HCT116 (cell line): ENCODE measurements at regions of chr4 and their contacts with region 1.

Region 1: DNA sequence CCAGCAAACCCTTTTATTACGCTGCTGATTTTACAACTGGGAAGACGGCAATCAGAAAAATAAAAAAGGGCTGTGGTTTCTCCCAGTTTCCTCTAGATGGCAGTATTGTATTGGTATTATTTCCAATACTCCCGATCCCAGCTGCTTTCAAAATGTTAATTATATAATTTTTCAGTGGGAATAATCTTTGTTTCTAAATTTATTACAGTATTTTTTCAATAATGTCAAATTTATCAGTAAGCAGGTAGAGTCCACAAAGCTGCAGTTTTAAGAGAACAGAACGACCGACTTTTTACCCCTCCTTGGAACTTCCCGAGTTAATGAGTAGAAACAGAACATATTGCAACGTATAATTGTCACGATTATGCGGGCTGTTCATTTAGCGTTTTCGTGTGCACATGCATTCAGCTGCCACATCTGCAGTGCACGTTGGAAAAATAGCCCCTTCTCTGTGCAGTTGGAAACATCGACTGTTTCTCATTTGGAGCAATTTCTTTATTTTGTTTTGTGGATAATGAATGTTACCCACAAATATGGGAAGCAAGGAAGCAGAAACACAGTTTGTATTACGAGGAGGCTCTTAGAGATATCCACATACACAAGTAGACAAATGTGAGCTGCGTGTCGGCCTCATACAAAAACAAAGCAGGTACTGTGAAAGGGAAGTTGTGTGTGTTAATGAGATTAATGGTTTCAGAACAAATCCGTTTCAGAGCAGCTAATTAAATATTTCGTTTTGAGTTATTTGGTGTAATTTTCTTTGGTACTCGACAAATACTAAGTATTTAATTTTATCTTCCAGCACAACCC is 188.0 kb downstream of the STIM2 start:
- DNase-seq: peak; percentile 21
- ATAC-seq: peak; percentile 64
- H3K4me3 ChIP-seq: peak overlapping the region; percentile 26 to 40
- H3K27ac ChIP-seq: no peak overlapping the region
- H3K4me1 ChIP-seq: peaks cover 0 to 4% of the 10 kb centered on the region in 2 experiments; a peak in 1 of 4 replicates
- H3K27me3 ChIP-seq: peaks cover 11% of the 10 kb centered on the region; the same call in 1 of the 2 replicates
- CTCF ChIP-seq: peak; percentile 31 to 65 (median 49); a peak in 4 of 6 replicates
- POLR2A ChIP-seq: no peak
- RAD21 ChIP-seq: peak; percentile 82

Region 2: DNA sequence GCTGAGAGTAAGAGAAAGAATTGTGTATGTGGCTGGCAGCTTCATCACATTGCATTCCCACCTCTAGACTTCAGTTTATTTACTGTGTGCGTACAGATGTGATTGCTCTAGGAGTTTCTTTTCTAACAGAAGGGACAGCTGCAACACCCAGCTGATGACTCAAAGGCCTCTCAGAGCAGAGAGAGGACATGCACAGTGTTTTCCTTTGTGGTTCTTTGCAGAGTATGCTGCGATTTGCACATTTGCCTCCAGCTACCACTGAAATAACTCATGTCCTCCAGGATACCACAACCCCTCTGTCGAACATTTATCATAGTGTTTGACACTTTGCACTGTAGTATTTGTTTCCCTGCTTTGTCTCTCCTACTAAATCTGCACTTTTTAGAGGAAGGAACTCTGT is 106.1 kb after region 1 on chr4:
- CTCF ChIA-PET with region 1: no interaction called
- POLR2A ChIA-PET with region 1: no interaction called
- RAD21 ChIA-PET with region 1: no interaction called
- intact Hi-C with region 1: no loop called
- DNase-seq: no peak
- ATAC-seq: no peak
- H3K4me3 ChIP-seq: no peak overlapping the region
- H3K27ac ChIP-seq: no peak overlapping the region
- H3K4me1 ChIP-seq: no peaks in the 10 kb centered on the region
- H3K27me3 ChIP-seq: no peaks in the 10 kb centered on the region
- CTCF ChIP-seq: no peak
- POLR2A ChIP-seq: no peak
- RAD21 ChIP-seq: no peak

Region 3: DNA sequence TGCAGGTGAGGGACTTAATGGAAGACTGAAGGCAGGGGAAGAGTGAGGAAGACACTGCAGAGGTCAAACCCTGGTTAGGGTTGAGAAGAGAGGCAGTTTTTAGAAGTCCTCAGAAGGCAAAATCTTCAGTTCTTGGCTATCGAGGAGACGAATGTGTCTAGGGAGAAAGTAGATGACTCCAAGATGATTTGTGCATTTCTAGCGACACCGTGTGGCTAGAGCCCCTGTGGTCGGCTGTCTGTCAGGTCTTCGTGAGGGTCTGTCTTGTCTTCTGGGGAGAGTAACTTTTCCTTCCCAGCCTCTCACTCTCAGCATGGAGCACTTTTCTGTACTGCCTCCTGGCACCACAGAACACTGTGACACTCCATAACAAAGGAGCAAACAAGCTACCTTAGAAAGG is 270.1 kb after region 1 on chr4:
- CTCF ChIA-PET with region 1: interaction called, 9 read pairs
- POLR2A ChIA-PET with region 1: no interaction called
- RAD21 ChIA-PET with region 1: interaction called in 1 of 2 experiments, 3 read pairs
- intact Hi-C with region 1: loop called (anchors 1 kb)
- DNase-seq: peak; percentile 35
- ATAC-seq: peak; percentile 84
- H3K4me3 ChIP-seq: no peak overlapping the region
- H3K27ac ChIP-seq: no peak overlapping the region
- H3K4me1 ChIP-seq: no peaks in the 10 kb centered on the region
- H3K27me3 ChIP-seq: no peaks in the 10 kb centered on the region
- CTCF ChIP-seq: peak; percentile 33 to 59 (median 50); a peak in 4 of 6 replicates
- POLR2A ChIP-seq: no peak
- RAD21 ChIP-seq: peak; percentile 67

Region 4: DNA sequence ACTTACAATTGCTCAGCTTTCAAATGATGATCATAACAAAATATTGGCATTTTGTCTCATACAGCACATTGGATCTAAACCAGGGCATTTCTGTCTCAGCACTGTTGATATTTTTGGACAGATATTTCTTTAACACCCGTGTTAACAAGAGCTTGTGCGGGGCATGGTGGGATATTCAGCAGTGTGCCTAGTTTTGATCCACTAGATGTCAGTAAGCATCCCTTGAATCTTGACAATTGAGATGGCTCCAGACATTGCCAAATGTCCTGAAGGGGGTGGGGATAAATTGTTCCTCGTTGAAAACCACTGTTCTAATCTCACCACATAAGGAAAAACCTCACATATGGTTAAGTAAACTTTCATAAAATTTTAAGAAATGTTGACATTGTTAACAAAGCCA is 618.3 kb after region 1 on chr4:
- CTCF ChIA-PET with region 1: no interaction called
- POLR2A ChIA-PET with region 1: no interaction called
- RAD21 ChIA-PET with region 1: no interaction called
- intact Hi-C with region 1: loop called (anchors 10 kb)
- DNase-seq: peak; percentile 61
- ATAC-seq: peak; percentile 99
- H3K4me3 ChIP-seq: no peak overlapping the region
- H3K27ac ChIP-seq: no peak overlapping the region
- H3K4me1 ChIP-seq: no peaks in the 10 kb centered on the region
- H3K27me3 ChIP-seq: no peaks in the 10 kb centered on the region
- CTCF ChIP-seq: peak; percentile 24 to 64 (median 61); a peak in 5 of 6 replicates
- POLR2A ChIP-seq: no peak
- RAD21 ChIP-seq: peak; percentile 50

Region 5: GRCh38 chr4:27692158-27692557 is 643.5 kb after region 1 on chr4:
- CTCF ChIA-PET with region 1: no interaction called
- POLR2A ChIA-PET with region 1: no interaction called
- RAD21 ChIA-PET with region 1: no interaction called
- intact Hi-C with region 1: loop called (anchors 10 kb)
- DNase-seq: peak; percentile 45
- ATAC-seq: peak; percentile 97
- H3K4me3 ChIP-seq: no peak overlapping the region
- H3K27ac ChIP-seq: no peak overlapping the region
- H3K4me1 ChIP-seq: no peaks in the 10 kb centered on the region
- H3K27me3 ChIP-seq: no peaks in the 10 kb centered on the region
- CTCF ChIP-seq: peak; percentile 35 to 83 (median 77); a peak in 4 of 6 replicates
- POLR2A ChIP-seq: no peak
- RAD21 ChIP-seq: peak; percentile 54